PC-9 (cell line): ENCODE measurements at regions of chr9 and their contacts with region 1.

Region 1: GRCh38 chr9:124320062-124320973 is 62.6 kb downstream of the NEK6 start:
- DNase-seq: peak; percentile 41 to 77
- H3K4me3 ChIP-seq: no peak overlapping the region
- H3K27ac ChIP-seq: no peak overlapping the region
- H3K4me1 ChIP-seq: no peaks in the 10 kb centered on the region
- H3K27me3 ChIP-seq: no peaks in the 10 kb centered on the region
- CTCF ChIP-seq: peak; percentile 89

Region 2: DNA sequence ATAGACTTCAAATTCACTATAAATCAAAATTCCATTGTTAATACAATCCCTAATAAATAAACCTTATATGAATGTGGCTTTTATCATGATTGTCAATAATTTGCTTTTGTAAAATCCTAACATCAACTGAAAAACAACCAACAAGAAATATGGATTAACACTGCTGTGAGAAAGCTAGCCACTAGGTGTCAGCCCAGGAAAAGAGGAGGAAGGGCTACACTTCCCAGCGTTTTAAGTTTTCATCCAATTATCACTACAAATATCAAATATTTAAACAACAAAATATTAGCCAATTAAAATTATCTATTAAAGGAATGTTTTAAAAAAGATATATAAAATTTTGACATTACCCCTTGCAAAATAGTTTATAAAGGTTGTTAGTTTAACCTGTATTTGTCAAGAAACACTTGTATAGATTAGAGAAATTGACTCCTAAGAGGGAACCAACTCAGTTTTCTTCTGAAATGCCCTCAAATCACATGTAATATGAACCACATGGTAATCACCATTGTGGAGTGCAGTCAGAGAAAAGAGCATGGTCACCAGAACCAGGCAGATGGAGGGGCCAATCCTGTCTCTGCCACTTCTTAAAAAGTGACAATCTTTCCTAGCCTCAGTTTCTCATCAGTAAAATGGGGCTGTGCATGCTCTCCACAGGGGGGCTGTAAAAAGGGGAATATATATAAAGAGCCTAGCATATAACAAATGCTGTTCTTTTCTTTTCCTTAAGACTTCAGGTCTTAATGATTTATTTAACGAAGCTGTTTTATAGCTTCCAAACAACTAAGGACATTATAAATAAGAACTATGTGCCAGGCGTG is 776.1 kb before region 1 on chr9:
- CTCF ChIA-PET with region 1: no interaction called
- POLR2A ChIA-PET with region 1: no interaction called
- intact Hi-C with region 1: loop called (anchors 10 kb)
- DNase-seq: peak in 1 of 2 experiments; percentile 15
- H3K4me3 ChIP-seq: no peak overlapping the region
- H3K27ac ChIP-seq: no peak overlapping the region
- H3K4me1 ChIP-seq: no peaks in the 10 kb centered on the region
- H3K27me3 ChIP-seq: no peaks in the 10 kb centered on the region
- CTCF ChIP-seq: peak; percentile 89

Region 3: DNA sequence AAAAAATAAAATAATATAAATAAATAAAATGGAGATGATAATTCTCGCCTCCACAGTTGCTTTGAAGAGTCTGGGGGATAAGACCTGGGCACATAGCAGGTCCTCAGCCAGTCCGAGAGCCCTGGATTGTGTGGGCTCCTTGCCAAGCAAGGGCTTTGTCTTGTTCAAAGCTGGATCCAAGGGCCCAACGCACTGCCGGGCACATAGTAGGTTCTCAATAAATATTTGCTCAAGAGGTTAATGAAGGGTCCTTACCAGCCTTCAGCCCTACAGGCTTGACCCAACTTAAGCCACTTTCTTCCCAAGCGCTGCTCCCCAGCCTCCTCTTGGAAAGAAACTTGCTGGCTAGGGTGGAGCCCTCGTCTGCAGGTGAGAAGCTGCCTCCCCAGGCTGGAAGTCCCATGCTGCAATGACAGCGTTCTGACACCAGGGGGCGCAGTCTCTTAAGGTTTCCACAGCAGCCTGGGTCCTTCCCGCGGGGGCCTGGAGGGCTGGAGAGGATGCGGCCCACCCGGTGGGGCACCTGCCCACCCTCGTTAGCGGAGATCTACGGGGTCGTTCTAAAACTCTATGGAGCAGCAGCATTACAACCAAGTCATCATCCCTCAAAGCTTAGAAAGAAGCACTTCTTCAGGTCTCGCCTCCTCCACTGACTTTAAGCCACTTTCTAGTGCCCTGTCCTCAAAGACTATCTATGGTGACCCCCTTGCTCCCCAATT is 193.6 kb before region 1 on chr9:
- CTCF ChIA-PET with region 1: interaction called, 4 read pairs
- POLR2A ChIA-PET with region 1: no interaction called
- intact Hi-C with region 1: loop called (anchors 1 kb)
- DNase-seq: peak; percentile 67 to 81
- H3K4me3 ChIP-seq: no peak overlapping the region
- H3K27ac ChIP-seq: no peak overlapping the region
- H3K4me1 ChIP-seq: no peaks in the 10 kb centered on the region
- H3K27me3 ChIP-seq: no peaks in the 10 kb centered on the region
- CTCF ChIP-seq: peak; percentile 99

Region 4: DNA sequence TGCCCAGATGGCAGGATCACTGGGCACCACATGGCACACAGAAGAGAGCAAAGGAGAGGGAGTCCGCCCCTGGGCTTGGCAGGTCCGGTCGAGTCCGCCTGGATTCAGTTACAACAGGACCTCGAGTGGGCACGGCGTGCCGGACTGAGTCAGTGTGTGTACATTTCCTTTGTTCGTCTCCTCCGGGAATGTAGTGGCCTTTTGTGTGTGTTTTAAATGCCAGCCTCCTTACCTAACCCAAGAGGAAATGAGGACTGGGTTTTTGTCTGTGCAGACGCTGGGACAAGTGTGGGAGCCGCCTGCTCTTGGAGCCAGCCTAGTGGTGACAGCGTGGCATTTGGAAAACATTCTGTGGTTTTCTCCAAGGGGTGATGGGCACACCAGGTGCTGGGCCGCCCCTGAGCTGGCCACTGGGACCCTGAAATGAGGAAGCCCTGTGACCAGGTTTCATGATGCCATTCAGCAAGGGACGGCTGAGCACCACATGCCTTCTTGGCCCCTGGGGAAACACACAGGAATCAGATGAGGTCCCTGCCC is 53.0 kb before region 1 on chr9:
- CTCF ChIA-PET with region 1: no interaction called
- POLR2A ChIA-PET with region 1: no interaction called
- intact Hi-C with region 1: loop called (anchors 1 kb)
- DNase-seq: peak in 1 of 2 experiments; percentile 88
- H3K4me3 ChIP-seq: no peak overlapping the region
- H3K27ac ChIP-seq: no peak overlapping the region
- H3K4me1 ChIP-seq: no peaks in the 10 kb centered on the region
- H3K27me3 ChIP-seq: no peaks in the 10 kb centered on the region
- CTCF ChIP-seq: no peak